ENCODE measurements at regions of chr5 and their contacts with region 1.

Region 1: DNA sequence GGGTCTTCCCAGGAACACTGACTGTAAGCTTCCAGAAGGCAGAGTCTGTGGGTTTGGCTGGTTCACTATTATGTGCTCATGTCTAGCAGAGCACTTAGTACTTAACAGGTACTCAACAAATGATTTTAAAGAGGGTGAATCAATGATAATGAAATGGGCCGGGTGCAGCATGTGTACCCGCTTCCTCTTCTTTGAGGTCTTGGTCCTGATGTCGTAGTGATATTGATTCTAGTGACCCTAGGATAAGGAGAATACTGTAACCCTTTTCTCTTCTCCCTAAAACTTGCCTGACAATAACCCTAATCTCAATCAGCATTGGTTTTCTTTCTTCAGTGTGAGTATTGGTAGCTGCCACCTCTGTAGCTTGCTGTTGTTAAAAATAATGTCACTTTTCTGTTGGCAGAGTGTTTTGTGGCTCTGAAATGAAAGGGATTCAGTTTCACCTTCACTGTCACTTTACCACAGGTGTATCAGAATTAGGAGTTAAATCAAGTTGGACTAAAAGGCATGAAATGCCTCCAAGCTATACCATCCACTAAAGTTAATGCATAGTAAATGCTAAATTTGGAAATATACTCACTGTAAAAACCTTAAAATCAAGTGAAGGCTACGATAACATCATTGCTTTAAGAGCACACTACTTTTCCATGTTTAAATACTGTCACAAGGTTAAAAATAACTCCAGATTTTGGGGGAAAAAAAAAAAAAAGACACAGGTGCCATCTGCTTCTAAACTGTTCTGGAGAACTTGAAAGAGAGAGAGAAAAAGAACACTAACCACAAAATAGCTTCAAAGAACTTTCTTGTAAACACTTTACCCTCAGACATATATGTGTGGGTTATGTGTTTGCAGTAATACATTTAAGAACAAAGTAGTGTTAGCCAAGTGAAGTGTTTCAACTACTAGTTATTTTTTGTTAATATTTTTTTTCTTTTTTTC is 6.0 kb downstream of the CAMK4 start:
- DNase-seq: no peak
- H3K4me3 Mint-ChIP-seq: peak overlapping the region; percentile 77
- H3K27ac Mint-ChIP-seq: peak overlapping the region; percentile 97
- H3K4me1 Mint-ChIP-seq: peaks cover 76% of the 10 kb centered on the region
- H3K27me3 Mint-ChIP-seq: no peaks in the 10 kb centered on the region

Region 2: DNA sequence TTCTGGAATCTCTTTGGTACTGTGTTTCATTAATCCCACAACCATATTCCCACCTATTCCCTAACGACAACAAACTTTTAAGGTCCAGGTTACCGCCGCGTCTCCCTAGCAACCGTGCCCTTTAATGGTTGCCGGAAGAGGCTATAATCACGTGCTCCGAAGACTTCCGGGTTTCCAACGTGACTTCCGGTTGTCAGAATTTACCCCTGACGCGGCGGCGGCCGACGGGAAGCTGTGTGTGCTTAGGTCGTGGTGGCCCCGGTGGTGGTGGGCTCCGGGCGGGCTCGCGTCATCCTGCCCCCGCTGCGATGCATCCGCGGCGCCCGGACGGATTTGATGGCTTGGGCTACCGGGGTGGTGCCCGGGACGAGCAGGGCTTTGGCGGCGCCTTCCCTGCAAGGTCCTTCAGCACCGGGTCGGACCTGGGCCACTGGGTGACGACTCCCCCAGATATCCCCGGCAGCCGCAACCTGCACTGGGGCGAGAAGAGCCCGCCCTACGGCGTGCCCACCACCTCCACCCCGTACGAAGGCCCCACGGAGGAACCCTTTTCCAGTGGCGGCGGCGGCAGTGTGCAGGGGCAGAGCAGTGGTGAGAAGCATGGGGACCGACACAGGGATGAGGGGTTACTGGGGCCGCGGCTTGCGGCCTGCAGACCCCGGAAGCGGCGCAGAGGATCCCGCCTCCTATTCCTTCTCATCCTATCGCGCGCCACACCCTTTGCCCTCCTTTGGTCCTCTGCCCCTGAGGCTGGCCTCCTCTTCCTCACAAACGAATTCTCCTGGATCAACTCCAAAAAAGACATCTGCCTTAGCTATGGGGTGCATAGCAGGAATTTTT is 491.1 kb before region 1 on chr5 and contains the start of gene SLC25A46:
- intact Hi-C with region 1: loop called (anchors 5 kb)
- DNase-seq: peak; percentile 86
- H3K4me3 Mint-ChIP-seq: peak within 1 kb of the TSS; percentile 97
- H3K27ac Mint-ChIP-seq: peak within 1 kb of the TSS; percentile 92
- H3K4me1 Mint-ChIP-seq: peaks cover 28% of the 10 kb centered on the region
- H3K27me3 Mint-ChIP-seq: peaks cover 11% of the 10 kb centered on the region
- total RNA-seq, gene SLC25A46: 44.0 and 44.8 TPM in 2 replicates

Region 3: GRCh38 chr5:111254613-111255012 is 24.5 kb after region 1 on chr5:
- intact Hi-C with region 1: loop called (anchors 1 kb)
- DNase-seq: peak; percentile 41
- H3K4me3 Mint-ChIP-seq: peak overlapping the region; percentile 35
- H3K27ac Mint-ChIP-seq: peak overlapping the region; percentile 97
- H3K4me1 Mint-ChIP-seq: peaks cover 70% of the 10 kb centered on the region
- H3K27me3 Mint-ChIP-seq: no peaks in the 10 kb centered on the region

Region 4: GRCh38 chr5:111271885-111272284 is 41.7 kb after region 1 on chr5:
- intact Hi-C with region 1: no loop called
- DNase-seq: no peak
- H3K4me3 Mint-ChIP-seq: no peak overlapping the region
- H3K27ac Mint-ChIP-seq: peak overlapping the region; percentile 31
- H3K4me1 Mint-ChIP-seq: peaks cover 33% of the 10 kb centered on the region
- H3K27me3 Mint-ChIP-seq: no peaks in the 10 kb centered on the region

Region 5: DNA sequence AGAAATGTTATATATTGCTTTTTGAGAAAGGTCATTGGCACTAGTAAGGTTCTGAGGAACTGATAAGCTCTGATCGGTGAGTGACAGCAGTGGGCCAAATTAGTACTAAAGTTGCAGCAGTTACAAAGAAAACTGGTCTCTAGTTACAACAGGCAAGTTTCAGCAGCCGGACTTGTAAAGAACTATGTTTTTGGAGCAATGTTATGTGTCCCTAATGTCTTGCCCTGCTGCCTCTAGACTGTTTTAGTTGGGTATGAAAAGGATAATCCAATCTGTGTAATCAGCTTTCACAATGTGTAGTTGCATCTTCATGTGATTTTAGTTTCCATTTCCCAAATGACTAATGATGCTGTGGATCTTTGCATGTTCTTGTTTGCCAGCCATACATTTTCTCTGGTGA is 107.5 kb after region 1 on chr5:
- intact Hi-C with region 1: loop called (anchors 1 kb)
- DNase-seq: no peak
- H3K4me3 Mint-ChIP-seq: no peak overlapping the region
- H3K27ac Mint-ChIP-seq: peak overlapping the region; percentile 77
- H3K4me1 Mint-ChIP-seq: peaks cover 40% of the 10 kb centered on the region
- H3K27me3 Mint-ChIP-seq: no peaks in the 10 kb centered on the region